ENCODE measurements at regions of chr1 and their contacts with region 1.

Region 1: GRCh38 chr1:53945433-53946251 is at the start of gene IFT25:
- DNase-seq: peak; percentile 93 to 95
- H3K4me3 ChIP-seq: peak within 1 kb of the TSS; percentile 91
- H3K4me3 Mint-ChIP-seq: peak within 1 kb of the TSS; percentile 94
- H3K27ac Mint-ChIP-seq: peak within 1 kb of the TSS; percentile 89
- H3K4me1 ChIP-seq: peaks cover 27% of the 10 kb centered on the region
- H3K4me1 Mint-ChIP-seq: peaks cover 30% of the 10 kb centered on the region
- H3K27me3 ChIP-seq: no peaks in the 10 kb centered on the region
- H3K27me3 Mint-ChIP-seq: no peaks in the 10 kb centered on the region
- CTCF ChIP-seq: no peak
- total RNA-seq, gene IFT25: 31.7 and 35.1 TPM in 2 replicates

Region 2: GRCh38 chr1:53860967-53861411 is 84.7 kb before region 1 on chr1:
- CTCF ChIA-PET with region 1: interaction called, 17 read pairs
- POLR2A ChIA-PET with region 1: no interaction called
- intact Hi-C with region 1: loop called (anchors 1 kb)
- DNase-seq: peak; percentile 41 to 55
- H3K4me3 ChIP-seq: no peak overlapping the region
- H3K4me3 Mint-ChIP-seq: peak overlapping the region; percentile 38
- H3K27ac Mint-ChIP-seq: no peak overlapping the region
- H3K4me1 ChIP-seq: no peaks in the 10 kb centered on the region
- H3K4me1 Mint-ChIP-seq: no peaks in the 10 kb centered on the region
- H3K27me3 ChIP-seq: no peaks in the 10 kb centered on the region
- H3K27me3 Mint-ChIP-seq: no peaks in the 10 kb centered on the region
- CTCF ChIP-seq: peak; percentile 60 to 71

Region 3: GRCh38 chr1:53889304-53890298 is 56.0 kb before region 1 on chr1 and contains the start of gene YIPF1:
- CTCF ChIA-PET with region 1: interaction called, 3 read pairs
- POLR2A ChIA-PET with region 1: interaction called, 13 read pairs
- intact Hi-C with region 1: no loop called
- DNase-seq: peak; percentile 83 to 85
- H3K4me3 ChIP-seq: peak within 1 kb of the TSS; percentile 69
- H3K4me3 Mint-ChIP-seq: peak within 1 kb of the TSS; percentile 93
- H3K27ac Mint-ChIP-seq: peak within 1 kb of the TSS; percentile 89
- H3K4me1 ChIP-seq: peaks cover 20% of the 10 kb centered on the region
- H3K4me1 Mint-ChIP-seq: peaks cover 9% of the 10 kb centered on the region
- H3K27me3 ChIP-seq: no peaks in the 10 kb centered on the region
- H3K27me3 Mint-ChIP-seq: no peaks in the 10 kb centered on the region
- CTCF ChIP-seq: no peak
- total RNA-seq, gene YIPF1: 16.6 and 17.2 TPM in 2 replicates

Region 4: DNA sequence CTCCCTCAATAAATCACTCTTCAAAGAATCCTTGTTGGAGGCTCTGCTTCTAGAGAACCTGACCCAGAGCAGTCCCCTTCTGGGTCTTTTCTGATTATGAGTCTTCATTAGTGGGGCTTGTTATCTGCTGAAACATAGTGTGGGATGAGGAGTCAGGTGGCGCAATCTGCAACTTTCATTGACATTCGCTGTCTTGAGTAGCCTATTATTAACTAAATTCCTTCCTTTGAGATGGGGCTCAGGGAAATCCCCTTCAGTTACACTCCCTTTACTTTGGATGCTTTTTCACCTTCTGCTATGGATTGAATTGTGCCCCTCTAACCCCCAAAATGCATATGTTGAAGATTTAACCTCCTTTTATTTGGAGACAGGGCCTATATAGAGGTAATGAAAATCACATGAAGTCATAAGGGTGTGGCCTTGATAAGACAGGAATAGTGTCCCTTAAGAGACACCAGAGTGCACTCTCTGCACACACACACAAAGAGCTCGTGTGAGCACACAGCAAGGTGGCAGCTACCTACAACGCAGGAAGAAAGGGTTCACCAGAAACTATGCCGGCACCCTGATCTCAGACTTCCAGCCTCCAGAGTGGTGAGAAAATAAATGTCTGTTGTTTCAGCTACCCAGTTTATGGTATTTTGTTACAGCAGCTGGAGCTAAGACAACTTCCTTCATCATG is 32.1 kb before region 1 on chr1:
- CTCF ChIA-PET with region 1: interaction called, 11 read pairs
- POLR2A ChIA-PET with region 1: interaction called, 9 read pairs
- intact Hi-C with region 1: loop called (anchors 2 kb)
- DNase-seq: no peak
- H3K4me3 ChIP-seq: no peak overlapping the region
- H3K4me3 Mint-ChIP-seq: no peak overlapping the region
- H3K27ac Mint-ChIP-seq: peak overlapping the region; percentile 46
- H3K4me1 ChIP-seq: peaks cover 41% of the 10 kb centered on the region
- H3K4me1 Mint-ChIP-seq: peaks cover 25% of the 10 kb centered on the region
- H3K27me3 ChIP-seq: no peaks in the 10 kb centered on the region
- H3K27me3 Mint-ChIP-seq: no peaks in the 10 kb centered on the region
- CTCF ChIP-seq: no peak

Region 5: GRCh38 chr1:54052934-54053744 is 107.5 kb after region 1 on chr1 and contains the starts of genes TCEANC2 and TMEM59:
- CTCF ChIA-PET with region 1: no interaction called
- POLR2A ChIA-PET with region 1: interaction called, 10 read pairs
- intact Hi-C with region 1: no loop called
- DNase-seq: peak; percentile 95 to 97
- H3K4me3 ChIP-seq: peak within 1 kb of the TSS; percentile 82
- H3K4me3 Mint-ChIP-seq: no peak within 1 kb of the TSS
- H3K27ac Mint-ChIP-seq: no peak within 1 kb of the TSS
- H3K4me1 ChIP-seq: no peaks in the 10 kb centered on the region
- H3K4me1 Mint-ChIP-seq: no peaks in the 10 kb centered on the region
- H3K27me3 ChIP-seq: no peaks in the 10 kb centered on the region
- H3K27me3 Mint-ChIP-seq: no peaks in the 10 kb centered on the region
- CTCF ChIP-seq: no peak
- total RNA-seq, gene TCEANC2: 1.9 and 3.2 TPM in 2 replicates
- total RNA-seq, gene TMEM59: 116 TPM in 2 replicates